ENCODE measurements at regions of chr2 and their contacts with region 1.

Region 1: GRCh38 chr2:172246649-172247048 is 143.9 kb upstream of the DLX2 start:
- DNase-seq: peak; percentile 57
- H3K4me3 Mint-ChIP-seq: no peak overlapping the region
- H3K27ac Mint-ChIP-seq: peak overlapping the region; percentile 100
- H3K4me1 Mint-ChIP-seq: peaks cover 68% of the 10 kb centered on the region
- H3K27me3 Mint-ChIP-seq: no peaks in the 10 kb centered on the region
- CTCF ChIP-seq: no peak

Region 2: DNA sequence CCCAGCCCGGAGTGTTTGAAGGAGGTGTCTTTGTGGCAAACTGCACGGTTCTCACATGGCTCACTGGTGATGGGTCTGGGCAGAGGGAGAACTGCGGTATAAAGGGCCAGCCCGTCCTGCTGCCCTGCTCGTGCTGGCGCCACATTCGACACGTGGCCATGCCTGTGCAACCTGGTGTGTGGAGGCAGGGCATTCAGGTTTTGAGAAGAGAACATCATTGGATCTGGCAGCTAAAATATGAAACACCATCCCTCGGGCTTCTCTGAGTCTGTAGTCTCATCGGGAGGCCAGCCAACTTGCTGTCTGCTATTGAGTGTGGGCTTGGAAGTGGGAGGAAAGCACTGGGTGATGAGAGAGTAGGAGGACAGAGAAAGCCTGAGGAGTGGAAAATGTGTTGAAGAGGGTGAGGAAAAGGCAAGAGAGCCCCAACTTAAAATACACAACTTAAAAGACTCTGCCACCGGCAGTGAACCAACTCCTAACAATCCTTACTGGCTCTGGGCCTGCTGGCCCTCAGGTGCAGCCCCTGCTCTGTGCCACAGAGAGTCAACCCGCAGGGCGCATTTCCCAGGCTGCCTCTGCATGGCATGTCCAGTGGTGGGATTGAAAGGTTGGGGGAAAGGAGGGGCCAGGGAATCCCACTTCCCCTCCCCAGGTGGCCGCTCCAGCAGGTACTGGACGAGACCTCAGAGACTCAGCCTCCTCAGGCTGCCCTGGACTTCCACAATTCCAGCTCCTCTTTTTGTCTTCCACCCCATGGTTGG is 31.3 kb before region 1 on chr2:
- CTCF ChIA-PET with region 1: no interaction called
- POLR2A ChIA-PET with region 1: interaction called, 17 read pairs
- intact Hi-C with region 1: no loop called
- DNase-seq: peak; percentile 60
- H3K4me3 Mint-ChIP-seq: no peak overlapping the region
- H3K27ac Mint-ChIP-seq: peak overlapping the region; percentile 81
- H3K4me1 Mint-ChIP-seq: peaks cover 20% of the 10 kb centered on the region
- H3K27me3 Mint-ChIP-seq: no peaks in the 10 kb centered on the region
- CTCF ChIP-seq: no peak

Region 3: GRCh38 chr2:172261292-172261691 is 14.6 kb after region 1 on chr2:
- CTCF ChIA-PET with region 1: no interaction called
- POLR2A ChIA-PET with region 1: interaction called, 14 read pairs
- intact Hi-C with region 1: no loop called
- DNase-seq: peak; percentile 65
- H3K4me3 Mint-ChIP-seq: peak overlapping the region; percentile 24
- H3K27ac Mint-ChIP-seq: peak overlapping the region; percentile 93
- H3K4me1 Mint-ChIP-seq: peaks cover 20% of the 10 kb centered on the region
- H3K27me3 Mint-ChIP-seq: no peaks in the 10 kb centered on the region
- CTCF ChIP-seq: no peak